MCF 10A (cell line): ENCODE measurements at regions of chr7 and their contacts with region 1.

Region 1: DNA sequence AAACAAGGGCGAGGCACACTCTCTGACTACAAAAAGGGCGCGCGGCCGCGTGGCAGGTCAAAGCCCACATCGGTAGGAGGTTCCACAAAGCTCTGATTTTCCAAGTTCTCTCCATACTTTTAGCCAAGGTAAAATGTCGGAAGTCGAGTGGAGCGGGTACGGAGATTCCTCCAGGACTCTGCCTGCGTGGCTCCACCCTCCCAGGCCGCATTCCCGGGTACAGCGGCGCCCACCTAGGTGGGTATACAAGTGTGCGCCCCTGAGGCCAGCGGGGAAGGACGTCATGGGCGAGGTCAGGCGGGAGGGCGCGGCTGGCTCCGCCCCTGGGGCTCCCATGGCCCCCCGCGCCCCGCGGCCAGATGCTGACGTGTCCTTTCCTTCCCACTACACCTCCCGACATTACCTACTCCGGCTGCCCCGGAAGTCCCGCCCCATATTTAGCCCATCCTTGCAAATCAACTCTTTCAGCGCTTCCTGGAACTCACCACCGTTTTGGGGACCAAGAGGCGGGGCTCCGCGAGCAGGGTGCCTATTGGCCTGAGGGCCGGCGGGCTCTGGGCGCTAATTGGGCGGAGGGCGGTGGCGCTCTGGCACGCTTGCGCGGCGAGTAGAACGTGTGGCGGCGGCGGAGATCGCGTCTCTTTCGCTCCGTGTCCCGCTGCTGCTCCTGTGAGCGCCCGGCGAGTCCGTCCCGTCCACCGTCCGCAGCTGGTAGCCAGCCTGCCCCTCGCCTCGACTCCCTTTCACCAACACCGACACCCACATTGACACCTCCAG is at the start of gene SND1:
- DNase-seq: peak; percentile 99
- H3K4me3 Mint-ChIP-seq: no peak within 1 kb of the TSS
- H3K27ac Mint-ChIP-seq: no peak within 1 kb of the TSS
- H3K4me1 Mint-ChIP-seq: peaks cover 27% of the 10 kb centered on the region
- H3K27me3 Mint-ChIP-seq: no peaks in the 10 kb centered on the region
- CTCF ChIP-seq: no peak
- total RNA-seq, gene SND1: 291 and 297 TPM in 2 replicates

Region 2: GRCh38 chr7:127585044-127585953 is 66.4 kb before region 1 on chr7 and contains the start of gene GCC1:
- CTCF ChIA-PET with region 1: interaction called, 3 read pairs
- POLR2A ChIA-PET with region 1: interaction called, 25 read pairs
- intact Hi-C with region 1: loop called (anchors 1 kb)
- DNase-seq: peak; percentile 80
- H3K4me3 Mint-ChIP-seq: peak within 1 kb of the TSS; percentile 79
- H3K27ac Mint-ChIP-seq: peak within 1 kb of the TSS; percentile 90
- H3K4me1 Mint-ChIP-seq: peaks cover 38% of the 10 kb centered on the region
- H3K27me3 Mint-ChIP-seq: no peaks in the 10 kb centered on the region
- CTCF ChIP-seq: no peak
- total RNA-seq, gene GCC1: 27.7 and 30.2 TPM in 2 replicates

Region 3: GRCh38 chr7:127667017-127667670 is 15.4 kb after region 1 on chr7:
- CTCF ChIA-PET with region 1: no interaction called
- POLR2A ChIA-PET with region 1: interaction called, 17 read pairs
- intact Hi-C with region 1: no loop called
- DNase-seq: peak; percentile 49
- H3K4me3 Mint-ChIP-seq: peak overlapping the region; percentile 36
- H3K27ac Mint-ChIP-seq: peak overlapping the region; percentile 41
- H3K4me1 Mint-ChIP-seq: peaks cover 61% of the 10 kb centered on the region
- H3K27me3 Mint-ChIP-seq: no peaks in the 10 kb centered on the region
- CTCF ChIP-seq: no peak